RWPE1 (cell line): ENCODE measurements at regions of chr2 and their contacts with region 1.

Region 1: GRCh38 chr2:114550895-114551793 is 108.7 kb downstream of the DPP10 start:
- DNase-seq: peak; percentile 36
- H3K27ac ChIP-seq: no peak overlapping the region
- CTCF ChIP-seq: peak; percentile 38

Region 2: DNA sequence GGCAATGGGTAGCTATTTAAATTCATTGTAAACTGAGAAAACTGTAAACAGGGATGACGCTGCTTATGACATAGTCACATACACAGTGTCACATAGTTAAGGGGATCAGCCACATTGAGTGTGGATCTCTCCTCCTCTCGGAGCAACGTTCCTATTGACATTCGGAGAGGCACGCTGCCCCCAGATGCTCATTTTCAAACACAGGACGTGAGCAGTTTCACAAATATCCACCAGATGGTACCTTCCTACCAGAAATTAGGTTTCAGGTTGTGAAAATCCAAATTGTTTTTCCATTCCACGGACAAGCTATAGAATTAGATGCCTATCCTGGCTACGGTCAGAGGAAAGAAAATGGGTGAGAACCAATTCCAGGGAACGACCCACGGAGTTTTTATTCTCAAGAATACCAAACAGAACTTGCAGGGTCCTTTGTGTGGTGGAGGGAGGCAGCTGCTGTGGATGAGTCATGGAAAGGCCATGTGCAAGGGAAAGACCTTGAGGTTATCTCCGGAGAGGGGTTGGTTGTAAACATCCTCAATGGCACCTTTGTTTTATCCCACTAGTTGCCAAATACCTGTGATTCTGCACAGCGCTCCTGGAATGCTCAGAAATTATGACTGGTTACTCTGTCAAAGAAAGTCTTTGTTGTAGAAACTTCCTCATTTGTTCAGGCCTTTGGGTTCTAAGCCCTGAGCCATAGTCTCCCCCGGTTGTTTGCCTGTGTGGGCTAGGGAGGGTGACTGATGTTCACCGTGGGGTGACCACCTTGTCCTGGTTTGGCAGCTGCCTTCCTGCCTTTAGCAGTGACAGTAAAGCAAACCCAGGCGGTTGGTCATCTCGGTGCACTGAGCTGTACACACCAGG is 573.3 kb before region 1 on chr2:
- CTCF ChIA-PET with region 1: interaction called, 19 read pairs
- POLR2A ChIA-PET with region 1: no interaction called
- DNase-seq: peak; percentile 63
- H3K27ac ChIP-seq: no peak overlapping the region
- CTCF ChIP-seq: no peak; the same call in 1 of the 2 replicates

Region 3: DNA sequence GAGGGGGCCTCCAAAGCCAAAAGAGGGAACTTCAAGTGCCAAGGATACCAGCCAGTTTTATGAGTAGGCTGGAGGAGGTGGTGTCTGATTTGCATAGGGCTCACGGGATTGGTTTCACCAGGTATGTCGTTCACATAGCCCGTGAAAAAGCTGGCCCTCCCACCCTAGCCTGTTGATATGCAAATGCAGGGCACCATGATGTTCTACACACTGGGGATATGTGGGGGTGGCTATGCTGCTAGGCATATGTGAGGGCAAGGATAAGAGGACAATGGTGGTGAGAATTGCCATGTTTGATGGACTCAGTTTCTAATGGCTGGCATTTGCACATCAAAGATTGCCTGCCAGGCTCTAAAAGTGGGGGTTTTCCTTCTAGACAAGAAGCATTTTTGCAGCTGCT is 269.9 kb after region 1 on chr2:
- CTCF ChIA-PET with region 1: no interaction called
- POLR2A ChIA-PET with region 1: no interaction called
- DNase-seq: no peak
- H3K27ac ChIP-seq: no peak overlapping the region
- CTCF ChIP-seq: no peak